ENCODE measurements at regions of chr9 and their contacts with region 1.

Region 1: DNA sequence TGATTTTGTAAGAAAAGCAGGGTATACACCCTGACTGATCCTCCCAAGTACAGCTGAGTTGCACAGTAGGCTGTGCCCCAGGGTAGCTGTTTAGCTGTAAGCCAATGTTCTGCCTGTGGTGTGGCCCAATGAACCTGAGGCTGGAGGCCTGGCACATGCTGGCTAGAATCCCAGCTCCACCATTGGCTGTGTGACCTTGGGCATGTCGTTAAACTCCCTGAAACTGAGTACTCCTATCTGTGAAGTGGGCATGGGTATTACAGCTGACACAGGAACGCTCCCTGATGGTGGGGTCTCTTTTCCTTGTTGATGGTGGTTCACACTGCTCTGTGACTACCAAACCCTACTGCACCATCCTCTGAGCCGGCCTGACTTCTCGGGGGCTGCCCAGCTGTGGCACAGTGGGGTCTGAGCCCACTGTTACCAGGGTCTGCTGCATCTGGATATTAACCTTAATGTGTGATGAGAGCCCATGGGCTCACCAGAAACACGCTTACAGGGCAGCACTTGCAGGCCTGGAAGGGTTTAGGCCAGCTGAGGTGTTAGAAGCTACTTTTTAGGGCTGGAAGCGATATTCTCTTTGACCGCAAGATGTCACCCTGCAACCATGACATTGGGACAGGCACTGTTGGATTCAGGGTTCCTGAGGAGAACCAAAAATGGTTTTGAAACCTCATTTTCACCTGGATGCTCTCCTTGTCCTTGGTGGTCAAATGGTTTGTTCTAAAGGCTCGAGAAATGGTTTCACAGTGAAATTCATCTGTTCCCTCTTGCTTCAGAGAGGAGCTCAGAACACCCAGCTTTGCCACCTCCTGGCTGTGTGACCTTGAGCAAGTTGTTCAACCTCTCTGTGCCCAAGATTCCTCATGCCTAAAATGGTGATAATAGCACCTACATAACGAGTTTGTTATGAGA is 6.8 kb upstream of the GADD45G start:
- DNase-seq: peak; percentile 68
- H3K4me3 Mint-ChIP-seq: no peak overlapping the region
- H3K27ac Mint-ChIP-seq: no peak overlapping the region
- H3K4me1 Mint-ChIP-seq: peaks cover 2% of the 10 kb centered on the region
- H3K27me3 Mint-ChIP-seq: peaks cover 10% of the 10 kb centered on the region

Region 2: GRCh38 chr9:89505911-89506310 is 92.1 kb before region 1 on chr9:
- CTCF ChIA-PET with region 1: no interaction called
- POLR2A ChIA-PET with region 1: no interaction called
- intact Hi-C with region 1: no loop called
- DNase-seq: no peak
- H3K4me3 Mint-ChIP-seq: no peak overlapping the region
- H3K27ac Mint-ChIP-seq: no peak overlapping the region
- H3K4me1 Mint-ChIP-seq: peaks cover 61% of the 10 kb centered on the region
- H3K27me3 Mint-ChIP-seq: no peaks in the 10 kb centered on the region

Region 3: GRCh38 chr9:89522261-89522958 is 75.6 kb before region 1 on chr9:
- CTCF ChIA-PET with region 1: no interaction called
- POLR2A ChIA-PET with region 1: no interaction called
- intact Hi-C with region 1: no loop called
- DNase-seq: peak; percentile 89
- H3K4me3 Mint-ChIP-seq: peak overlapping the region; percentile 58
- H3K27ac Mint-ChIP-seq: peak overlapping the region; percentile 92
- H3K4me1 Mint-ChIP-seq: peaks cover 89% of the 10 kb centered on the region
- H3K27me3 Mint-ChIP-seq: no peaks in the 10 kb centered on the region

Region 4: DNA sequence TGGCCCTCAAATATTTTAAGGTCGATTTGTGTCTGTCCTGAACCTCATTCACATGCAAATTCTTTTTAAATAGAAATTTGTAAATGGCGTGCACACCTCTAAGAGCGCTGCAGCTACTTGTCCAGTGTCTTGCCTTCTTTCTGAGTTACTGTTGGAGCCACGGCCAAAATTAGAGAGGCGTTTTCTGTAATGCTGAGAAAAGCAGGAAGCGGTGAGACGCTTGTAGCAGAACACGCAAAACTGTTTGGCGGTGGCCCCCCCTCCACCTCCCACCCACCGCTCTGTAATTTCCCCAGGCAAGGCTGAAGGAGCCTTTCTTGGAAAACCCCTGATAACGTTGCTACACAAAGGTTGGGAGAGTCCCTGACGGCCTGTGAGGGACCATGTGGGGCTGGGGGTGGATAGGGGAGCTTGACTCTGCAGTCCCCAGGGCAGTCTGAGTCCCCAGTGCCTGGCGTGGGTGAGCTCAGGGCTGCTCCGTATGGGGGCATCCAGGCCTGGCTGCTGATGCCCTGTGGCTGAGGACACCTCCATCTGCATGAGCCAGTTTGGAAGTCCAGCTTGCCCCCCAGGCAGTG is 103.3 kb after region 1 on chr9:
- CTCF ChIA-PET with region 1: interaction called, 13 read pairs
- POLR2A ChIA-PET with region 1: no interaction called
- intact Hi-C with region 1: loop called (anchors 1 kb)
- DNase-seq: peak; percentile 93
- H3K4me3 Mint-ChIP-seq: peak overlapping the region; percentile 52
- H3K27ac Mint-ChIP-seq: peak overlapping the region; percentile 34
- H3K4me1 Mint-ChIP-seq: peaks cover 44% of the 10 kb centered on the region
- H3K27me3 Mint-ChIP-seq: no peaks in the 10 kb centered on the region

Region 5: GRCh38 chr9:90025816-90026215 is 427.8 kb after region 1 on chr9:
- CTCF ChIA-PET with region 1: no interaction called
- POLR2A ChIA-PET with region 1: no interaction called
- intact Hi-C with region 1: no loop called
- DNase-seq: no peak
- H3K4me3 Mint-ChIP-seq: no peak overlapping the region
- H3K27ac Mint-ChIP-seq: no peak overlapping the region
- H3K4me1 Mint-ChIP-seq: no peaks in the 10 kb centered on the region
- H3K27me3 Mint-ChIP-seq: peaks cover under 1% of the 10 kb centered on the region

Region 6: DNA sequence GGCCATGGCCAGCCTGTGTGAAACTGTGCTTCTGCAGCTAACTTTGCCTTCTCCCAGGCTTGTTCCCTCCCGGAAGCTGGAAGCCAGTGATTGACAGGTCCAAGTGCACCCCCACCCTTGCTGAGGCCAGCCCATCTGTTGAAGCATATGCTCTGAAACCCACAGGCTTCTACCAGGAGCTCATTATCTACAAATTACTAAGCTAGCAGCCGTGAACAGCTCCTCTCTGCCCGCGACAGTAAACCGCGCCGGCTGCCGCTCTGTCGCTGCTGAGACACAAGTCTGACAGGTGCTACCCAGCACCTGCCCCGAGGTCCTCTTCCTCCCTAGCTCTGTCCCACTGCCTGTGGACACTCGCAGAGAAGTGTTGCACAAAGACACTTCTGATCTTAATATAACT is 497.7 kb after region 1 on chr9:
- CTCF ChIA-PET with region 1: interaction called, 258 read pairs
- POLR2A ChIA-PET with region 1: interaction called, 6 read pairs
- intact Hi-C with region 1: no loop called
- DNase-seq: peak; percentile 19
- H3K4me3 Mint-ChIP-seq: no peak overlapping the region
- H3K27ac Mint-ChIP-seq: no peak overlapping the region
- H3K4me1 Mint-ChIP-seq: peaks cover 18% of the 10 kb centered on the region
- H3K27me3 Mint-ChIP-seq: peaks cover 7% of the 10 kb centered on the region

Region 7: GRCh38 chr9:90219548-90220118 is 621.7 kb after region 1 on chr9:
- CTCF ChIA-PET with region 1: no interaction called
- POLR2A ChIA-PET with region 1: no interaction called
- intact Hi-C with region 1: loop called (anchors 10 kb)
- DNase-seq: peak; percentile 39
- H3K4me3 Mint-ChIP-seq: no peak overlapping the region
- H3K27ac Mint-ChIP-seq: no peak overlapping the region
- H3K4me1 Mint-ChIP-seq: no peaks in the 10 kb centered on the region
- H3K27me3 Mint-ChIP-seq: peaks cover 7% of the 10 kb centered on the region

Measured in activated CD4-positive, alpha-beta memory T cell treated with anti-CD3 and anti-CD28 coated beads for 36 hours (primary cell).